ENCODE measurements at regions of chr1 and their contacts with region 1.

Region 1: GRCh38 chr1:184892116-184892515 is 82.2 kb downstream of the NIBAN1 start:
- DNase-seq: no peak
- ATAC-seq: no peak
- H3K4me3 ChIP-seq: no peak overlapping the region
- H3K27ac ChIP-seq: peak overlapping the region in 1 of 2 donors; percentile 28
- H3K4me1 ChIP-seq: peaks cover 3 to 19% of the 10 kb centered on the region in 2 donors
- H3K27me3 ChIP-seq: no peaks in the 10 kb centered on the region

Region 2: DNA sequence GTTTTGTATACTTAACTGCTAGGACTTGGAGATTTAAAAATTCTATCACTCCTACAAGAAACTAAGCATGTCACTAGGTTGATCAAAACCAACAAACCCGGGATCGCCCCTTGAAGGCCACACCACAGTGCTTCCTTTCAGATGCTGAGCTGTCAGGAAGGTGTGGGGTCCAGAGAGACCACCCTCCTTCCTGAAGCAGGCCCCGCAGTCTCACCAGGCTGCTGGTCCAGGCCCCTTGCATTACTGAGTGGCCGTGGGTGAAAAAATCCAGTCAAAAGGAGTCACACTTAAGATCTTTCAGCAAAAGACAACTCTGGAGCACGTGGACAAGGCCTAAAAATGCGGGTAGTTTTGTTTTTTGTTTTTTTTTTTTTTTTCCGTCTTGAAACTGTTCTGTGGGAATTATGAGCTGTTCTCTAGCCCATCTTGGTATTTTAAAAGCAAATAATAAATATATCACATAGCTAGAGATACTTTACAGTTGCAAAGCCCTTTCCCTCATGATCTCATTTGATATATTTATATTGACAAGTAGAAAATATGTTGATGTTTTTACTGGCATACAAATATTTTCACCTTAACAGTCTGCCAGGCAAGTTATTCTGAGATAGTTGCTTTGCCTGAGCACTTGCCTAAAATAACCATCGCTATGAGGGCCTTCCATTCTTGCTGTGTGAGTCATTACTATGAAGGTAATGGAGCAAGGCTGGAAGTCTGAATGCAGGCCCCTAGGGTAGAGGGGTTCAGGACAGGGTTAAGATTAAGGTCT is 64.3 kb before region 1 on chr1:
- intact Hi-C with region 1: loop called in 1 of 2 experiments (anchors 5 kb)
- DNase-seq: no peak
- ATAC-seq: peak; percentile 83
- H3K4me3 ChIP-seq: no peak overlapping the region
- H3K27ac ChIP-seq: peak overlapping the region; percentile 97 to 98
- H3K4me1 ChIP-seq: peaks cover 8 to 12% of the 10 kb centered on the region in 2 donors
- H3K27me3 ChIP-seq: no peaks in the 10 kb centered on the region

Region 3: DNA sequence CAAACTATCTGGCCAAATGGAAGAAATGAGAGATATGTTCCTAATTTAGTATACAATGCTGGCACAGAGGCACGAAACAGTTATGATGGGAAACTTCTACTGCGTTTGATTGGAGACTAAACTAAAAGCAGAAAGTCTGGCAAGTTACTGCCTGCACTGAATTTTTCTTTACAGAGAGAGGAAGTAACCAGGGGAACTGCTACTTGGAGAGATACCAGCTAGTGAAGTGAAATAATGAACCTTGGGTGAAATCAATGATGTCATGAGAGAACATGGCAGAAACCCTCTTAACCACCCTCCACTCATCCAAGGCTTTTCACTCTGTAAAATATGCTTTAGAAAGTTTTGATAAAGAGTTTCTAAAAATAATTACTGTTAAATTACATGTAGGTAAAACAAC is 52.9 kb after region 1 on chr1:
- intact Hi-C with region 1: loop called in 1 of 2 experiments (anchors 5 kb)
- DNase-seq: no peak
- ATAC-seq: peak; percentile 67
- H3K4me3 ChIP-seq: no peak overlapping the region
- H3K27ac ChIP-seq: peak overlapping the region; percentile 48 to 93
- H3K4me1 ChIP-seq: peaks cover 6 to 13% of the 10 kb centered on the region in 2 donors
- H3K27me3 ChIP-seq: no peaks in the 10 kb centered on the region

Region 4: DNA sequence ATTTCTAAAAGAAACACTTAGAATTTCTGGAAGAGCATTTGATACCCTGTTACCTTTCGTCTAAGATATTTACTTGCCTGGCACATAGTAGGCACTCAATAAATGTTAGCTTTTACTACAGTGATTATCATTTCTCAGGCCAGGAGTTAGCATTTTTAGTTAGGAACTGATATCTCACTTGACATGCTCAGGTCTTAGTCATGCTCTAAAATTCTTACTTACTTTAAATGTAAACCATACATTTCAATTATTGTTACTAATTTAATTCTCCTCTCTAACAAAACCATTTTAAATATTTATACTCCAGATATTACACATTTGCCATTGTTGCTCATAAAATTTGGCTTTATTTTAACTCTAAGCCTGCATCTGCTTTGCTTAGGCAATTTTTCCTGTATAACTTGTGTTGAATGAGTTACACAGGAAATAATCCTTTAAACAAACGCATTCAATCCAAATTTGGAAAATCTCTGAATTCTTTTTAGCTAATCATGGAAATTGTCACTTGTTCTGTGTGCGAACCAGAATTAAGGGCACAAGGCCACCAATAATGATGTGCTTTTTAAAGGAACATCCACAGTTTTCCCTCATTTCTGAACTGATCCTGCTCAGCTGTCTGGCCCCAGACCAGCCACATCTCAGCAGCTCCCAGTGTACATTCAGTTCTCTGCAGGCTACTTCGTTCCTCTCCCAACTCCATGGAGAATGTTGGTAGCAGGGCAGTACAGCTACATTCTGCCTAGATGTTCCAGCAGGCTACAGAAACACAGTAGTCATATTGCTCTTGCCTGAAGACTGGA is 66.6 kb after region 1 on chr1:
- intact Hi-C with region 1: loop called in 1 of 2 experiments (anchors 5 kb)
- DNase-seq: no peak
- ATAC-seq: peak; percentile 62
- H3K4me3 ChIP-seq: peak overlapping the region in 1 of 2 donors; percentile 10
- H3K27ac ChIP-seq: peak overlapping the region; percentile 43 to 48
- H3K4me1 ChIP-seq: peaks cover 6 to 11% of the 10 kb centered on the region in 2 donors
- H3K27me3 ChIP-seq: no peaks in the 10 kb centered on the region

Measured in aorta (tissue), 5 donors.